AG04450 (cell line): ENCODE measurements at regions of chr18 and their contacts with region 1.

Region 1: DNA sequence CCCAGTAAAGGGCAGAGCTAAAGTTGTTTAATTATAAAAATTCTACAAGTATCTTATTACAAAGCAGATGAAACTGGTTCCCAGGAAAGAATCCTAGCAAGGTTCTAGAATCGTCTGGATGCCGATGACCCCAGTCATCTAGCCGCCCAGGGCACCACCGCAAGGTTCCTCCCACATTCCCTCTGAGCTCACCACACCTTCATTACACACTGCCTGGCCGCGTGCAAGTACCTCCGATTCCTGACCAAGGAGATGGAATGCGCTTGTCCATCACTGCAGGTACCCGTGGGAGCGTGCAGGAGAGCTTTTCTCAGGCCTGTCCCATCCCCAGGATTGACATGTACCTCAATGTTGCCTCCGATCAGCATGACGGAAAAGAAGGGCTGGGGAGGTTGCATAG is 158.5 kb downstream of the LAMA1 start:
- DNase-seq: no peak
- H3K4me3 ChIP-seq: no peak overlapping the region
- H3K27ac ChIP-seq: no peak overlapping the region
- H3K27me3 ChIP-seq: no peaks in the 10 kb centered on the region
- CTCF ChIP-seq: no peak

Region 2: DNA sequence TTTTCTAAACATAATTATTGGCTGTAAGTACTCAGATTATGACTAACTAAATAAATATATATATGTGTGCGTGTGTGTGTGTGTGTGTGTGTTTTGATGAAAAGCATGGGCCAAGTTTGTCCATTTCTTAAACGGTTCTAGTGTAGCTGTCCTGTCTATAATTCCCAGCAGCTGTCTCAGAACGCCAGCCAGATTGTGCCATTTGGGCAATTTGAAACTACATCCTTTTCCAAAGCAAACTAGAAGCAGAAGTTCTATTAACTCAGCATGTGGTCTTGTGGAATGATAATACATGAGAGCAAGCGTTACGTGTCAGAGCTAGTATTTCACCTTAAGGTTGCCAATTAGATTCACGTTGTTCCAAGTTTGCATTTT is 227.9 kb before region 1 on chr18:
- CTCF ChIA-PET with region 1: no interaction called
- POLR2A ChIA-PET with region 1: no interaction called
- DNase-seq: peak; percentile 89
- H3K4me3 ChIP-seq: peak overlapping the region; percentile 72
- H3K27ac ChIP-seq: peak overlapping the region; percentile 11
- H3K27me3 ChIP-seq: no peaks in the 10 kb centered on the region
- CTCF ChIP-seq: no peak

Region 3: DNA sequence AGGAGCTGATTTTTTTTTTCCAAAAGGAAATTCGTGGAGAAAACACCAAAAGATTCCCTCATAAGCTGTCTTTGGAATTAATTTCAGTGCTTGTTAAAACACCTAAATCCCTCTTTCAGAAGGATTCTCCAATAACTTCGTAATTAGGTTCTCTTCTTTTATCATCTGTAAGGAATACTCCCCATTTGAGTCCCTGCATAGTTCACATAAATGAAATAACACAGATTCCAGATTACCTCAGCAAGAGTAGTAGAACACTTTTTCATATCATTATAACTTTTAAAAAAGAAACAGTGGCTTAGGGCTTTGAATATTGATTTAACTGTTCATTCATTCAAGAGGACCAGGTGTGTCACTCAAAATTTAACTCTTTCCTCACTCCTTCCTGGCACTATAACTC is 174.1 kb before region 1 on chr18:
- CTCF ChIA-PET with region 1: no interaction called
- POLR2A ChIA-PET with region 1: interaction called, 12 read pairs
- DNase-seq: no peak
- H3K4me3 ChIP-seq: no peak overlapping the region
- H3K27ac ChIP-seq: no peak overlapping the region
- H3K27me3 ChIP-seq: no peaks in the 10 kb centered on the region
- CTCF ChIP-seq: no peak